Posterior vena cava (tissue), 2 donors: ENCODE measurements at regions of chr20 and their contacts with region 1.

Region 1: DNA sequence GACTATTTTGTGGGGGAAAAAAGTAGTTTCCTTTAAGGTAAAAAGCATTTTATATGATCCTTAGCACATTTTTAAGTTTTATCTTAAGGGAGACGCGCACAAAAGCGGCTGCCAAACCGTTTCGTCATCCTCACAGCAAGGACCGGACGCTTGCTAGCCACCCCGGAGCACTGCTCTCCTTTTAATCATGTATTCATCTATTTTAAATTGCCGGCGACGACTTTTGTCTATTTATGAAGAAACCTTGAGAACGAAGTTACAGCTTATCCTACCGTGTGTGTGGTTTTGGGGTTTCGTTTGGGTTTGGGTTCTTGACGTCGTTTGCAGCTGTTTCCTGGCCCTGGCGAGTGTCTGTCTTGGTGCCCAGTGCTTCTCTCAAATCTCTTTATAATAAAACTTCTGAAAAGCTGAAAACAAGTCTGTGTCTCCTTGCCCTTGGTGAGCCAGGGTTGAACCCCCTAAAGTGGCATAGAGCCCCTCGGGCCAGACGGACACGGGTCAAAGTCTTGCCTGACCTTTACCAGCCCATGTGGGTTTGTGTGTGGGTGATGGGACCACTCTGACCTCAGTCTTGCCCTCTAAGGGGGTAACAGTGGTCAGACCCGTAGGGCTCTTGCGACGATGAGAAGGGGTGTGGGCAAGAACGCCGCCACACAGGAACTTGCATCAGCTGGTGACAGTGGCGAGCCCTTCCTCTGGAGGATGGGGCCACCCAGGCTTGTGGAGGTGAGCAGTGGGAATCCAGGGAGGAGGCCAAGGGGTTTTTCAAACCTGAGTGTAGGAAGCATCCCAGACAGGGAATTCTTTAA is 117.6 kb downstream of the JPH2 start:
- DNase-seq: no peak

Region 2: GRCh38 chr20:43537921-43538877 is 531.2 kb before region 1 on chr20:
- intact Hi-C with region 1: loop called in 1 of 2 experiments (anchors 10 kb)
- DNase-seq: peak; percentile 86

Region 3: GRCh38 chr20:44104798-44105517 is 35.6 kb after region 1 on chr20:
- intact Hi-C with region 1: no loop called
- DNase-seq: no peak

Region 4: DNA sequence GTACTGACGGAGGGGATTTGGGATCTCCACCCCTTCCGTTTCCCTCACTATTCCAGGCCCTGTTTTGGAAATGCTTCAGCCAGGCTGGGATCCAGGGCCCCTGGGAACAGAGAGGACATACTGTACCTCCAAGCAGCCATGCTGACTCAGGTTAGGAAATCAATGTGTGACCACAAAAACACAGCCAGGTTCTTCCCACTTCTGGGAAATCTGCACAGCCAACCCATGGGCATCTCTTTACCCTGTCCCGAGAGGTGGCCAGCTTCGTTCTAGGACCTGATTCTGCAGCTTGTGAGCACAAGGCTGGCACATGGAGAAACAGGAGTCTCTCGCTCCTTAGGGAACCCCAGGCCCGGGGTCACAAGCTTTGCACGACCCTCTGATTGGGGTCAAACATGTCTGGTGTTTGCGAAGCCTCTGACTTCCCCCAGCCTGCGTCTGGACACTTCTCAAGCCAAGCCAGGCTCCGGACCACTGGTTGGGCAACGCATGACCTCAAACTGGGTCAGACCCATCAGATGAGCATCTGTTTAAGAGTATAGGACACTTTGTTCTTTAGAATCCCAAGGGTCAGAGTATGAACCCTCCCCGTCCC is 398.0 kb after region 1 on chr20:
- intact Hi-C with region 1: no loop called
- DNase-seq: peak; percentile 87